ENCODE measurements at regions of chr16 and their contacts with region 1.

Region 1: DNA sequence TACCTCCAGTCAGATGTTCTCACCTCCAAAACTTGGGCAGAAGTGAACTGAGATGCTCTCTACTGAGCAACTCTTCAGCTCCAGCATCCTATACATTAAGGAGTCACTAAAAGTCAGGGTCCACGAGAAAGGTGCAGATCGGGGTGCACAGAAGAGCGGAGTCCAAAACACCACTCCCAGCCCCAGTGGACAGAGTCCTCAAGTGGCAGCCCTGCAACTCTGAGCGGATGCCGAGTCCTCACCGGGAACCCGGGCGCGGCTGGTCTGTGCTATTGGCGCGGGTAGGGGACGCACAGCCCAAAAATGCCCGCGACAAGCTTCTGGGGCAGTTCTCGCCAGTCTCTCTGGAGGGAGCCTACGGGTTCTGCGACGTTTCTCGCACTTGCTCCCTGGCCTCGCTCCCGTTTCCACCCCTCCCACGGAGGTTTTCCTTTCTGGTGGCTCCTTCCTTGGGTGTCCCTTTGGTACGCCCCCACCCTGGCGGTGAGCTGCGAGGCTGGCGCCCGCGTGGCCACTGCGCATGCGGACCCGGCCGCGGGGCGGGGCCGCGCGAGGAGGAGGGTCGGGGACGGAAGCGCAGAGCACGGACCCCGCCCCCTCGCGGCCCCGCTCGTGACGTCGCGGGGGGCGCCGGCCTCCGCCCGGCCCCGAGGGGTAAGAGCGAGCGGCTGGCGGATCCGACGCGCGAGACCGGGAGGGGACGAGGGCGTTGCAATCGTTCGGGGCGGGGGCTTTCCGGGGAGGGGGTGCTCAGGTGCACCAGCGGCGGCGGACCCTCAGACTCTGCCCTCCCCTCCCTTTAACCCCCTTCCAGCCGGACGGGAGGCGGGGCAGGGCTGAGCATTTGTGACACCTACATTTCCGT is at the start of gene TMEM219:
- DNase-seq: peak; percentile 76 to 98
- H3K4me3 ChIP-seq: peak within 1 kb of the TSS; percentile 78
- H3K27ac ChIP-seq: no peak within 1 kb of the TSS; the same call in 1 of the 2 replicates
- H3K4me1 ChIP-seq: peaks cover 11% of the 10 kb centered on the region
- H3K27me3 ChIP-seq: no peaks in the 10 kb centered on the region
- CTCF ChIP-seq: no peak; the same call in 1 of the 2 replicates
- total RNA-seq, gene TMEM219: 141 and 203 TPM in 2 replicates

Region 2: DNA sequence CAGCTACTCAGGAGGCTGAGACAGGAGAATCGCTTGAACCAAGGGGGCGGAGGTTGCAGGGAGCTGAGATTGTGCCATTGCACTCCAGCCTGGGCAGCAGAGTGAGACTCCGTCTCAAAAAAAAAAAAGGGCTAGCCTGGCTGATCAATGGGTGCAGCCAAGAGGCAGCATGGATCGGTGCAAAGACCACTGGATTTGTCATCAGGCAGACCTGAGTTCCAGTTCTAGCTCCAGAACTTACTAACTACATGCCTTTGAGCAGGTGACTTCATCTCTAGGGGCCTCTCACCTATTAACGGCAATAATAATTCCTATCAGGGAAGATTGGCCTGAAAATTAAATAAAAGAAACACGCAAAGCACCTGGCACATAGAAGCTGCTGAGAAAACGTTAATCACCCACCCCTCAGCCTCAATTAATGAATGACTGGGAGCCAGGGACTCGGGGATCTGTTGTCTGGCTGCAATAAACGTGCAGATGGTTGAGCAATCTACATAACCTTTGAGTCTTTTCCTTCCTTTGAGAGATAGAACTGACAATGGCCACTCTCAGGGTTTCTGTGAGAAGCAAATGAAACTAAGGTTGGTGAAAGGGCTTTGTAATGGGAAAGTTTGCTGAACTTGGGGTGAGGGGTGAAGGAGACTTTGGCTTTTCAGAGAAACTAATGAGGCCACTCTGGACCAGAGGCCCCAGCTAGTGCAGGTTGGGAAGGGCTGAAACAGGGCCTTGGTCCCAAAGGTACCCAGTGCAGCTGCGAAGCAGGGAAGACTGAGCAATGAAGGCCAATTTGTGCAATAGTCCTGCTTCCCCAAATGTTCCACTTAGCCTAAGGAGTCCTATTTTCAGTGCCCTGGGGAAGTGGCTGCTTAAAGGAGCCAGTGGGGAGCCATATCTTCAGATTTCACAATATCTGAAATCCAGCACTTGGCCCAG is 69.9 kb before region 1 on chr16:
- CTCF ChIA-PET with region 1: no interaction called
- POLR2A ChIA-PET with region 1: interaction called, 15 read pairs
- intact Hi-C with region 1: no loop called
- DNase-seq: no peak
- H3K4me3 ChIP-seq: no peak overlapping the region
- H3K27ac ChIP-seq: no peak overlapping the region
- H3K4me1 ChIP-seq: no peaks in the 10 kb centered on the region
- H3K27me3 ChIP-seq: no peaks in the 10 kb centered on the region
- CTCF ChIP-seq: no peak

Region 3: DNA sequence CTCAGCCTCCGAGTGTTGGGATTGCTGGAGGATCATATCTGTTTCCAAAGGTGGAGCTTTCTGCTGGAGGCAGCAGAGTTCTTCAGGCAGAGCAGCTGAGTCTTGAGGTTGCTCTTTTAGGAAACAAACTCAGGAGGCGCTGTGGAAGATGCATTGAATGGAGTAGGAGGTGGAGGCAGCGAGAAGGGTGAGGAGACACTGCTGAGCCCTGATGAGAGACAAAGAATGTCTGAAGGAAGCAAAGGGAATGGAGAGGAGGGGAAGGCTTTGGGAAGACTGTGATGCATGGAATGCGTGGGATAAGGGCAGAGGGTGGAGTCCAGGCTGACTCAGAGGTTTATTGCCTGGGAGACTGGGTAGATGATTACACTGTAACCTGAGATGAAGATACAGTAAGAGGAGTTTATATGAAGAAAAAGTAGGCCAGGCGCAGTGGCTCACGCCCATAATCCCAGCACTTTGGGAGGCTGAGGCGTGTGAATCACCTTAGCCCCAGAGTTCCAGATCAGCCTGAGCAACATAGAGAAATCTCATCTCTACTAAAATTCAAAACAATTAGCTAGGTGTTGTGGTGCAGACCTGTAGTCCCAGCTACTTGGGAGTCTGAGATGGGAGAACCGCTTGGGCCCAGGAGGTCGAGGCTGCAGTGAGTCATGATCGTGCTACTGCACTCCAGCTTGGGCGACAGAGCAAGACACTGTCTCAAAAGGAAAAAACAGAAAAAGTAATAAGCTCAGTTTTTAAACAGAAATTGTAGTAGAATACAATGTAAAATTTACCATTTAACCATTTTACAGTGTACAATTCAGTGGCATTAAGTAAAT is 17.7 kb before region 1 on chr16:
- CTCF ChIA-PET with region 1: interaction called, 7 read pairs
- POLR2A ChIA-PET with region 1: interaction called, 6 read pairs
- intact Hi-C with region 1: loop called (anchors 1 kb)
- DNase-seq: peak; percentile 92 to 99
- H3K4me3 ChIP-seq: peak overlapping the region; percentile 47; the same call in 1 of the 2 replicates
- H3K27ac ChIP-seq: peak overlapping the region; percentile 94
- H3K4me1 ChIP-seq: peaks cover 26% of the 10 kb centered on the region
- H3K27me3 ChIP-seq: no peaks in the 10 kb centered on the region
- CTCF ChIP-seq: peak; percentile 69

Region 4: DNA sequence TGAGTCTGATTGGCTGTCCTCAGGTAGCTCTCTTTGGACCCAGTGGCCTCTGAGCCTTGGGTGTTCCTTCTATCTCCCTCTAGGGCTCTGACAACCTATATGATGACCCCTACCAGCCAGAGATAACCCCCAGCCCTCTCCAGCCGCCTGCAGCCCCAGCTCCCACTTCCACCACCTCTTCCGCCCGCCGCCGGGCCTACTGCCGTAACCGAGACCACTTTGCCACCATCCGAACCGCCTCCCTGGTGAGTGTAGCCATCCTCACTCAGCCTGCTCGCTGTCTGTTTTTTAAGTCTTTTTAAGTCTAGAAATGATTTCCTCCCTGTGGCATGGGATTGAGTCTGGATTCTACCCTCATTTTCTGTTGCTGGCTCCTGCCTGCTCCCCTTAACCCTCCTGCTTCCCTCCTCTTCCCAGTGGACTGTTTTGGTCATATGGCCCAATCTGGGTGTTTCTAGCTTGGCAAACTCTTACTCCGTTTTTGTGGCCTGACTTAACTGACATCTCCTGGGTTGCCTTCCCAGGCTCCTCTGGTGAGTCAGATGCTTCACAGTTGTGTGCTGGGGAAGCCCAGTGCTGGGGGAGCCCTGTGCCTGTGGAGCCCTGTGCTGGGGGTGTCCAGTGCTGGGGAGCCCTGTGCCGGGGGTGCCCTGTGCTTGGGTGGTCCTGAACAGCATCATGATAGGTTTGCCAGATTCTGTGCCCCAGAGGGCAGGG is 21.9 kb after region 1 on chr16:
- CTCF ChIA-PET with region 1: no interaction called
- POLR2A ChIA-PET with region 1: interaction called, 26 read pairs
- intact Hi-C with region 1: no loop called
- DNase-seq: no peak
- H3K4me3 ChIP-seq: no peak overlapping the region
- H3K27ac ChIP-seq: no peak overlapping the region
- H3K4me1 ChIP-seq: no peaks in the 10 kb centered on the region
- H3K27me3 ChIP-seq: no peaks in the 10 kb centered on the region
- CTCF ChIP-seq: no peak

Region 5: DNA sequence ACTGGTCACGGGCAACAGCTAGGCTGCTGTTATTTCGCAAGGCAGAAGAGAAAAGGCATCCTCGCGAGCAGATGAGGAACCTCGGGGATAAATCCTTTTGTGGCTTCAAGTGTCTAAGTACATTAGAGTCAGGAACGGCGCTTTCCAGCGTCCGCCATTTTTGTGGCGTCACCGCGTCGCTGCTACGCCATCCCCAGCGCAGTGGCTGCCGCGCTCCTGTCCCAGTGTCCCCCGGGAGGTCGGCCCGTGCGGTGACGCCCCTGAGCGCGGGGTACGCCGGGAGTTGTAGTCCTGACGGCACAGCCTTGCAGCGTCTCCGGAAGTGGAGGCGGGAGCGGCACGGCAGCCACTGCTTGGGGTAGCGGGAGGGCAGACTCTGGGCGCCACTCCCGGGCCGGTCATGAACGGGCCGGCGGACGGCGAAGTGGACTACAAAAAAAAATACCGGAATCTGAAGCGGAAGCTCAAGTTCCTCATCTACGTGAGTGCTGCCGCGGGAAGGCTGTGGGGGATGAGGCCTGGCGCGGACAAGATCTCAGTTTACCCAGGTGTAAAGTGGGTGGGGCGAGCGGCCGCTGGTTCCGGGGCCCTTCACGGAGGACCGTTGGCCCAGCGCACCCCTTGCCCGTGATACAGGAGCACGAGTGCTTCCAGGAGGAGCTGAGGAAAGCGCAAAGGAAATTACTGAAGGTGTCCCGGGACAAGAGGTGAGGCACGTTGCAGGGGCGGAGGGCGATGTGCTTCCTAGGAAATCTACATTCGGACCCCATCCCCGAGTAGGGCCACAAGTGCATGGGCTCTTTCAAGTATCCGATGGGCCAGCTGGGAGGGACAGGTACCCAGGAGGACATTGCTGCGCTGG is 34.4 kb after region 1 on chr16 and contains the start of gene INO80E:
- CTCF ChIA-PET with region 1: no interaction called
- POLR2A ChIA-PET with region 1: interaction called, 4 read pairs
- intact Hi-C with region 1: loop called (anchors 1 kb)
- DNase-seq: peak; percentile 91 to 100
- H3K4me3 ChIP-seq: peak within 1 kb of the TSS; percentile 72
- H3K27ac ChIP-seq: peak within 1 kb of the TSS; percentile 74
- H3K4me1 ChIP-seq: peaks cover 25% of the 10 kb centered on the region
- H3K27me3 ChIP-seq: no peaks in the 10 kb centered on the region
- CTCF ChIP-seq: no peak
- total RNA-seq, gene INO80E: 102 TPM in 2 replicates

Region 6: GRCh38 chr16:30065143-30065850 is 103.6 kb after region 1 on chr16 and contains the start of gene ALDOA:
- CTCF ChIA-PET with region 1: no interaction called
- POLR2A ChIA-PET with region 1: no interaction called
- intact Hi-C with region 1: no loop called
- DNase-seq: peak; percentile 95 to 100
- H3K4me3 ChIP-seq: peak within 1 kb of the TSS; percentile 94
- H3K27ac ChIP-seq: peak within 1 kb of the TSS; percentile 92
- H3K4me1 ChIP-seq: peaks cover 50% of the 10 kb centered on the region
- H3K27me3 ChIP-seq: no peaks in the 10 kb centered on the region
- CTCF ChIP-seq: no peak
- total RNA-seq, gene ALDOA: 2,395 and 3,090 TPM in 2 replicates

Measured in PC-9 (cell line).